Panc1 (cell line): ENCODE measurements at regions of chr4 and their contacts with region 1.

Region 1: DNA sequence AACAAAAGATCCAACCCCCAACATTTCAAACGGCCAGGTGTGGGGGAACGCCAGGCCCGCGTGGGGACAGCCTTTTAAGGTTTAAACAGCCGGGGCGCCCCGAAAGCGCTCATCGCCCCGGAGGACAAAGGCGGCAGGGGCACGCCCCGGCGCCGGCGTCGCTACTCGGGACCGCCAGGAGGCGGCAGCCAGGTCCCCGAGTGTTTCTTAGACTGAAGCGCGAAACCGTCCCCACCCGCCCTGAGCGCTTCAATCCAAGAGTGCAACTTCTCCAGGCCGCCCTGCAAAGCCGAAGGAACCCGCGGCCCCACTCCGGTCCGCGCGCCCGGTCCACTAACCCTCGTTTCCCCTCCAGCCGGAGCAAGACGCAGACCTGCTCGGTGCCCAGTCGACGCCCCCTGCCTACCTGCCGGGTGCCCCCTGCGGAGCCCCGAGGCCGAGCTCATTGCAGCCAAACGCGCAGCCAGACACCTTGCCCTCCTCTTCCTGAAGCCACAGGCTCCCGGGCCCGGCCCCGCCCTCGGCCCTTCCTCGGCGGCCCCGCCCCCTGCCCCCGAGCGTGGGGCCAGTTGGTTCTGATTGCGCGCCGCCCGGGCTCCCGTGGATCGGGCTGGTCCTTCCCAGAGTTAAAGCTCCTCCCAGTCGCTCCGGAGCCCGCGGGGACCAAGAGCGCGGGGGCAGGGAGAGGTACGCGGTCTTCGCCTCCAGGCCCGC is at the start of gene CASP6:
- DNase-seq: no peak
- ATAC-seq: peak; percentile 90
- H3K4me3 ChIP-seq: peak within 1 kb of the TSS; percentile 67 to 76
- H3K27ac ChIP-seq: peak within 1 kb of the TSS; percentile 70
- H3K4me1 ChIP-seq: peaks cover 13% of the 10 kb centered on the region
- H3K27me3 ChIP-seq: no peaks in the 10 kb centered on the region
- CTCF ChIP-seq: peak; percentile 71
- total RNA-seq, gene CASP6: 15.2 TPM

Region 2: GRCh38 chr4:109511414-109511813 is 191.7 kb before region 1 on chr4:
- CTCF ChIA-PET with region 1: no interaction called
- POLR2A ChIA-PET with region 1: no interaction called
- in situ Hi-C with region 1: no loop called
- intact Hi-C with region 1: no loop called
- DNase-seq: no peak
- ATAC-seq: no peak
- H3K4me3 ChIP-seq: no peak overlapping the region
- H3K27ac ChIP-seq: no peak overlapping the region
- H3K4me1 ChIP-seq: no peaks in the 10 kb centered on the region
- H3K27me3 ChIP-seq: no peaks in the 10 kb centered on the region
- CTCF ChIP-seq: no peak

Region 3: DNA sequence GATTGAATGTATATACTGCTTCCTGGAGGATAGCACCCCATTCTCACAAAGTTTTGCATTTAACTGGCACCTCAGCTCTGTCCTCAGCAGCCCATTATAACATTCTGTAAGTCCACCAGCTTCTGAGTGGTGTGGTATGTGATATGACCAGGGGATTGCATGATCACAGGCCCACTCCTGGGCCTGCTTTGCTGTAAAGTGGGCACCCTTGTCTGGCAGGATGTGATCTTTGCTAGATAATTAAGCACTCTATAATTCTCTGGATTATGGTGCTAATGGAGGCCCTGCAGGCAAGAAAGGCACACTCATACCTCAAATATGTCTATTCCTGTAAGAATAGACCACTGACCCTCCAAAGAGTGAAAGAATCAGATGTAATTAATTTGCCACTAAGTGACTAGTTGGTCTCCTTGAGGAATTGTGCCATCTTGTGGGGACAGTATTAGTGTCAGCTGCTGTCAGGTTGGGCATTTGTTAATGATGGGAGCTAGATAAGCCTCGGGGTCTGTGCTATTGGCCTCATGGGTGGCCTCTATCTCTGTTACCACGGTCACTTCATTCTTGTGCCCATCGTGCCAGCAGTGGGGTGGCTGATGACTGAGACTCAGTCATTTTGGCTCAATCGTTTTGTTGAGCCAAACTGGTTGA is 100.9 kb after region 1 on chr4:
- CTCF ChIA-PET with region 1: no interaction called
- POLR2A ChIA-PET with region 1: no interaction called
- in situ Hi-C with region 1: no loop called
- intact Hi-C with region 1: loop called (anchors 5 kb)
- DNase-seq: no peak
- ATAC-seq: peak; percentile 82
- H3K4me3 ChIP-seq: no peak overlapping the region
- H3K27ac ChIP-seq: no peak overlapping the region
- H3K4me1 ChIP-seq: no peaks in the 10 kb centered on the region
- H3K27me3 ChIP-seq: no peaks in the 10 kb centered on the region
- CTCF ChIP-seq: peak; percentile 58

Region 4: GRCh38 chr4:109972786-109973528 is 269.9 kb after region 1 on chr4:
- CTCF ChIA-PET with region 1: no interaction called
- POLR2A ChIA-PET with region 1: interaction called, 17 read pairs
- in situ Hi-C with region 1: no loop called
- intact Hi-C with region 1: no loop called
- DNase-seq: no peak
- ATAC-seq: no peak
- H3K4me3 ChIP-seq: no peak overlapping the region
- H3K27ac ChIP-seq: no peak overlapping the region
- H3K4me1 ChIP-seq: no peaks in the 10 kb centered on the region
- H3K27me3 ChIP-seq: no peaks in the 10 kb centered on the region; the same call in 1 of the 2 replicates
- CTCF ChIP-seq: no peak

Region 5: DNA sequence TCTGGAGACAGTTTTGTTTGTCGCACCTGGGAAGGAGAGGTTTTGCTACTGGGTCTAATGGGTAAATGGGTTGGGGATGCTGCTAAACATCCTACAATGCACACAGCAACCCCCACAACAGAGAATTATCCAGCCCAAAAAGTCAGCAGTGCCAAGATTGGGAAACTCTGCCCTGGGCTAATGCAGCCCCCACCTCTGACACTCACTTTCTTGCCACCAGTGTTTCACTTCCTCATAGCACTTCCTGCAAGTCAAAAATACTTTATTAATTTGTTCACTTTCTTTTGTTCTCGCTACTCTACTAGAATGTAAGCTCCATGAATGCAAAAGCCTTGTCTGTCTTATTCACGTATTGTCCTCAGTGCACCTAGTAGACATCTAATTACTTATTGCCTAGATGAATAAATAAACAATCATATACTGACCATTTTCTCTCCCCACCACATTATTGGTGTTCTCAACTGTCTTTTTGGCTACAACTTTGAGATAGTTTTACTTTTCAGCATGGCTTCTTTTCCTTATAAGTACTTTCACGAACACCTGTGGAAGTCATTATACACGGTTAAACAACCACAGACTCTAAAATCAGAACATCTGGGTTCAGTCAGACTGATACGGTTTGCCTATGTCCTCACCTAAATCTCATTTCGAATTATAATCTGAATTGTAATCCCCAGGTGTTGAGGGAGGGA is 1001.8 kb after region 1 on chr4:
- CTCF ChIA-PET with region 1: no interaction called
- POLR2A ChIA-PET with region 1: no interaction called
- in situ Hi-C with region 1: no loop called
- intact Hi-C with region 1: no loop called
- DNase-seq: no peak
- ATAC-seq: no peak
- H3K4me3 ChIP-seq: no peak overlapping the region
- H3K27ac ChIP-seq: no peak overlapping the region
- H3K4me1 ChIP-seq: no peaks in the 10 kb centered on the region
- H3K27me3 ChIP-seq: no peaks in the 10 kb centered on the region
- CTCF ChIP-seq: no peak